Mammary epithelial cell (primary cell): ENCODE measurements at regions of chr5 and their contacts with region 1.

Region 1: GRCh38 chr5:125412561-125413495 is 666.4 kb upstream of the ZNF608 start:
- DNase-seq: peak; percentile 84
- H3K4me3 ChIP-seq: no peak overlapping the region
- H3K27ac ChIP-seq: peak overlapping the region; percentile 99
- H3K4me1 ChIP-seq: peaks cover 50% of the 10 kb centered on the region
- H3K27me3 ChIP-seq: no peaks in the 10 kb centered on the region
- CTCF ChIP-seq: peak; percentile 41 to 75

Region 2: DNA sequence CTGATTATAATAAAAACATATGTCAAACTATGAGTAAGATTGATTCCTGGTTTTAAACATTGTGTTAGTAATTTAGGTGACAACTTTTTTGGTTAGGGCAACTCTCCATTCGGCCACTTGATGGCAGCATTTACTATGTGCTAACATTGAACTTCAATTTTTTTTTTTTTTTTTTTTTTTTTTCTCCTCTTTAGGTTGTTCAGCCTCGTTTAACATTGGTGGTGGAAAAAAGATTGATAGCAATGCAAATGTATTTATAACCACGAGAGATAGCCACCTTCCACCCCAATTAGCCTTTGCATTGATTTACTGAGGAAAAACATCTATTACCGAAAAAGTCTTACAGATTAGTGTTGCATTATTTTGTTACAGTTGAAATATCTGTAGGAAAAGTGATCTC is 1741.8 kb before region 1 on chr5:
- CTCF ChIA-PET with region 1: no interaction called
- dilution Hi-C with region 1: no loop called
- in situ Hi-C with region 1: no loop called
- intact Hi-C with region 1: loop called (anchors 10 kb)
- DNase-seq: peak; percentile 23
- H3K4me3 ChIP-seq: no peak overlapping the region
- H3K27ac ChIP-seq: no peak overlapping the region
- H3K4me1 ChIP-seq: no peaks in the 10 kb centered on the region
- H3K27me3 ChIP-seq: no peaks in the 10 kb centered on the region
- CTCF ChIP-seq: peak; percentile 67 to 80

Region 3: DNA sequence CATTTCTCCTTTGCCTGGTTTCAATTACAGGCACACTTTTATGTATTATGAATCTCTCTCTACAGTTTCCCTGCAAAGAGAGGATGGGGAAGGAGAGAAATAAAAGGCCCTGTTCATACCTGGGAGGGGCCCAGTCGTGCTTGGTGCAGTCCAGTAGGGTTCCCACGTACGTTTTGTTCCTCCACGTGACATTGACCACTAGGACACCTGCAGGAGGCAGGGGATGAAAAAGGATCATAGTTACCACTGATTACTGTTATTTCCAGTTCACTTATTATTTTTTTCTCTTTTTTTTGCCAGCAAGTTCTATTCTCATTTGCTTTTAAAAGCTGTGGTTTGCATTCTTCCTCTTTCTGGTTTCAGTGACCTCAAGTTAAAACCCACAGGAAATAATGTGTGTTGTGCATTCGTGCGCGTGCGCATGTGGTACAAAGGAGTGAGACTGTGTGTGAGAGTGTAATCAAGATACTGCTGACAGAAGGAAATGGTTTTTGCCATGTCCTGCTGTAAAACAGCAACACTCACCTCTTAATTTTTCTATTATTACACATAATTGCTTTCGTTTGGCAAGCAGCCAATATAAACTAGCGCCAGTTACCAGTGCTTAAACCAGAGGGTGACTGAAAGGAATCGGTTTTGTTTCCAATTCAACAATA is 763.2 kb before region 1 on chr5:
- CTCF ChIA-PET with region 1: no interaction called
- dilution Hi-C with region 1: no loop called
- in situ Hi-C with region 1: no loop called
- intact Hi-C with region 1: loop called (anchors 5 kb)
- DNase-seq: peak; percentile 90
- H3K4me3 ChIP-seq: no peak overlapping the region
- H3K27ac ChIP-seq: peak overlapping the region; percentile 56
- H3K4me1 ChIP-seq: peaks cover 55% of the 10 kb centered on the region
- H3K27me3 ChIP-seq: no peaks in the 10 kb centered on the region
- CTCF ChIP-seq: no peak

Region 4: GRCh38 chr5:125057912-125058826 is 354.7 kb before region 1 on chr5:
- CTCF ChIA-PET with region 1: no interaction called
- dilution Hi-C with region 1: no loop called
- in situ Hi-C with region 1: no loop called
- intact Hi-C with region 1: loop called (anchors 10 kb)
- DNase-seq: no peak
- H3K4me3 ChIP-seq: no peak overlapping the region
- H3K27ac ChIP-seq: peak overlapping the region; percentile 2
- H3K4me1 ChIP-seq: peaks cover 31% of the 10 kb centered on the region
- H3K27me3 ChIP-seq: no peaks in the 10 kb centered on the region
- CTCF ChIP-seq: no peak

Region 5: DNA sequence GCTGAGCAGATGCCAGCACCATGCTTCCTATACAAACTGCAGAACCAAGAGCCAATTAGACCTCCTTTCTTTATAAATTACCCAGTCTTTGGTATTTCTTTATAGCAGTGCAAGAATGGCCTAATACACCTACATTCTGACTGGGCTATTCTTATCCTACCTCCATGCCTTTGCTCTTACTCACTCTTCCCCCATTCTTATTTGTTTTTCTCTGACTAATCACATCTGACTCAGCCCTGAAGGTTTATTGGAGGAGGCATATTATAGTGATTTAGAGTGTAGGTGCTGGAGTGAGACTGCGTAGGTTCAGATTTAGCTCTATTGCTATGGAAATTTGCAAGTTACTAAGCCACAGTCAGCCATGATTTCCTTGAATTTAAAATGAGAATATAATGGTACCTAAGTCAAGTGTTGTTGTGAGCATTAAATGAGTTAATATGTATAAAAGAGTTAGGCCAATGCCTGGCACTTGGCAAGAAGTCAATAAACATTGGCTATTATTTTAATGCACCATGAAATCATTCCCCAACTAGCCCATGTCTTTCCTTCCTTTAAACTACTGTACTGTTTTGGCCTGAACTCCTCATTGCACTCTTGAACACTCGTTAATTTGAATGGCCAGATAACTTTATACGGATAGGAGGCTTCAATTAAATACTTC is 135.2 kb before region 1 on chr5:
- CTCF ChIA-PET with region 1: no interaction called
- dilution Hi-C with region 1: no loop called
- in situ Hi-C with region 1: no loop called
- intact Hi-C with region 1: loop called (anchors 5 kb)
- DNase-seq: peak; percentile 95
- H3K4me3 ChIP-seq: no peak overlapping the region
- H3K27ac ChIP-seq: peak overlapping the region; percentile 70
- H3K4me1 ChIP-seq: peaks cover 19% of the 10 kb centered on the region
- H3K27me3 ChIP-seq: no peaks in the 10 kb centered on the region
- CTCF ChIP-seq: no peak

Region 6: GRCh38 chr5:125559296-125559695 is 146.5 kb after region 1 on chr5:
- CTCF ChIA-PET with region 1: no interaction called
- dilution Hi-C with region 1: no loop called
- in situ Hi-C with region 1: no loop called
- intact Hi-C with region 1: loop called (anchors 5 kb)
- DNase-seq: peak; percentile 94
- H3K4me3 ChIP-seq: no peak overlapping the region
- H3K27ac ChIP-seq: peak overlapping the region; percentile 32
- H3K4me1 ChIP-seq: peaks cover 13% of the 10 kb centered on the region
- H3K27me3 ChIP-seq: no peaks in the 10 kb centered on the region
- CTCF ChIP-seq: no peak

Region 7: GRCh38 chr5:126100767-126101166 is 687.9 kb after region 1 on chr5:
- CTCF ChIA-PET with region 1: no interaction called
- dilution Hi-C with region 1: no loop called
- in situ Hi-C with region 1: no loop called
- intact Hi-C with region 1: loop called (anchors 10 kb)
- DNase-seq: no peak
- H3K4me3 ChIP-seq: no peak overlapping the region
- H3K27ac ChIP-seq: no peak overlapping the region
- H3K4me1 ChIP-seq: peaks cover 9% of the 10 kb centered on the region
- H3K27me3 ChIP-seq: no peaks in the 10 kb centered on the region
- CTCF ChIP-seq: peak; percentile 38 to 51